H1 (cell line): ENCODE measurements at regions of chr10 and their contacts with region 1.

Region 1: GRCh38 chr10:86363184-86363832 is 3.3 kb downstream of the GRID1 start:
- DNase-seq: peak in 1 of 2 experiments; percentile 88
- H3K4me3 ChIP-seq: peak overlapping the region; percentile 45 to 59 (median 54)
- H3K27ac ChIP-seq: no peak overlapping the region
- H3K4me1 ChIP-seq: peaks cover 0 to 34% (median 23%) of the 10 kb centered on the region in 4 experiments; a peak in 6 of 7 replicates
- H3K27me3 ChIP-seq: peaks cover 55 to 71% (median 69%) of the 10 kb centered on the region in 4 experiments
- CTCF ChIP-seq: peak in 2 of 3 experiments; percentile 62 to 85; a peak in 3 of 4 replicates
- EP300 ChIP-seq: no peak
- POLR2A ChIP-seq: no peak
- RAD21 ChIP-seq: peak; percentile 78 to 87

Region 2: GRCh38 chr10:86178401-86179152 is 184.7 kb before region 1 on chr10:
- CTCF ChIA-PET with region 1: interaction called, 30 read pairs
- POLR2A ChIA-PET with region 1: no interaction called
- DNase-seq: peak; percentile 47 to 83
- H3K4me3 ChIP-seq: no peak overlapping the region
- H3K27ac ChIP-seq: no peak overlapping the region
- H3K4me1 ChIP-seq: no peaks in the 10 kb centered on the region
- H3K27me3 ChIP-seq: no peaks in the 10 kb centered on the region; a peak in 1 of 7 replicates
- CTCF ChIP-seq: peak; percentile 87 to 95 (median 90)
- EP300 ChIP-seq: no peak
- POLR2A ChIP-seq: no peak
- RAD21 ChIP-seq: peak; percentile 81 to 88

Region 3: GRCh38 chr10:86254526-86255174 is 108.7 kb before region 1 on chr10:
- CTCF ChIA-PET with region 1: interaction called, 48 read pairs
- POLR2A ChIA-PET with region 1: no interaction called
- DNase-seq: peak in 1 of 2 experiments; percentile 45
- H3K4me3 ChIP-seq: no peak overlapping the region
- H3K27ac ChIP-seq: no peak overlapping the region
- H3K4me1 ChIP-seq: peaks cover 0 to 6% (median 5%) of the 10 kb centered on the region in 4 experiments; a peak in 4 of 7 replicates
- H3K27me3 ChIP-seq: no peaks in the 10 kb centered on the region; a peak in 1 of 7 replicates
- CTCF ChIP-seq: no peak
- EP300 ChIP-seq: no peak
- POLR2A ChIP-seq: no peak
- RAD21 ChIP-seq: no peak

Region 4: GRCh38 chr10:86261941-86262687 is 101.2 kb before region 1 on chr10:
- CTCF ChIA-PET with region 1: interaction called, 48 read pairs
- POLR2A ChIA-PET with region 1: no interaction called
- DNase-seq: peak; percentile 43 to 67
- H3K4me3 ChIP-seq: no peak overlapping the region
- H3K27ac ChIP-seq: no peak overlapping the region
- H3K4me1 ChIP-seq: peaks cover 0 to 12% (median 7%) of the 10 kb centered on the region in 4 experiments; a peak in 6 of 7 replicates
- H3K27me3 ChIP-seq: peaks cover 0 to 10% (median 4%) of the 10 kb centered on the region in 4 experiments; a peak in 5 of 7 replicates
- CTCF ChIP-seq: peak; percentile 74 to 83 (median 74)
- EP300 ChIP-seq: no peak
- POLR2A ChIP-seq: no peak
- RAD21 ChIP-seq: peak; percentile 75 to 80

Region 5: DNA sequence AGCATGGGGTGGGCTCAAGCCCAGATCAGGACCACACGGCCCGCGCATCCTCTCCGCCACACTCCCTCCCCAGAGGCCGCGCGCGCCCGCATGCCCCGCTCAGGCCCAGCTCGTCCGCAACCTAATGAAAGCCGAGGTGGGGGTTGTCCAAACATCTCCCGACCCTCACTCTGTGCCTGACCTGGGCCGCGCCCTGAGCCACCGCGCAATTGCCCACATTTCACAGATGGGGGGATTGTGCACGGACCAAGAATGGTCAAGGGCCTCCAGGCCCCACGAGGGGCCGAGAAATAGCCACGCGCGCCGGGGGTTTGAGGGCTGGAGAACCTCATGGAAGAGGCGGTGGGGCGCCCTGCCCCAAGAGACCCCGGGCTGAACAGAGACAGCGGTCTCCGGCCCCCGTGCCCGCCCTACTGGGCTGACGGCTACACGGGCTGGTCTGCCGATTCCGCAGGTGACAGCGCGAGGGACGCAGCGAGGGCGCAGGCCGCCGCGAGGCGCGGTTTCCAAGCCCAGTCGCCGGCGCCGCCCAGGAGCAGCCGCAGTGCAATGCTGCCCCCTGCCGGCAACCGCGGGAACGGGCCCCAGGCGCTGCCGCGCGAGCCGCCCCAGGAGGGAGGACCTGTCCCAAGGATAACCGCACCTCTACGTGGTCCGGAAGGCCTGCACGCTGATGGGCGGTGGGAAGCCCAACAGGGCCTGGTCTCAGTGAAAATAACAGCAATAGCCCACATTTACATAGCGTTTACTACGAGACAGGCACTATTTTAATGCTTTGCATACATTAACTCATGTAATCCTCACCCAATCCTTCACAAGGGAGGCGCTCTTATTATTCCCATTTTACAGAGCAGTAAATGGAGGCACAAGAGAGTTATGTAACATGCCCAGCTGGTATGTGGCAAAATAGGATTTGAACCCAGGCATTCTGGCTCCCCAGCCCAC is 13.8 kb after region 1 on chr10:
- CTCF ChIA-PET with region 1: interaction called, 498 read pairs
- POLR2A ChIA-PET with region 1: no interaction called
- DNase-seq: peak in 1 of 2 experiments; percentile 100
- H3K4me3 ChIP-seq: peak overlapping the region in 3 of 4 experiments; percentile 11 to 51 (median 20); a peak in 4 of 8 replicates
- H3K27ac ChIP-seq: no peak overlapping the region
- H3K4me1 ChIP-seq: peaks cover 0 to 3% (median 0%) of the 10 kb centered on the region in 4 experiments; a peak in 1 of 7 replicates
- H3K27me3 ChIP-seq: peaks cover 7 to 26% (median 14%) of the 10 kb centered on the region in 4 experiments
- CTCF ChIP-seq: peak; percentile 90 to 98 (median 96)
- EP300 ChIP-seq: no peak
- POLR2A ChIP-seq: no peak
- RAD21 ChIP-seq: peak; percentile 96 to 98

Region 6: DNA sequence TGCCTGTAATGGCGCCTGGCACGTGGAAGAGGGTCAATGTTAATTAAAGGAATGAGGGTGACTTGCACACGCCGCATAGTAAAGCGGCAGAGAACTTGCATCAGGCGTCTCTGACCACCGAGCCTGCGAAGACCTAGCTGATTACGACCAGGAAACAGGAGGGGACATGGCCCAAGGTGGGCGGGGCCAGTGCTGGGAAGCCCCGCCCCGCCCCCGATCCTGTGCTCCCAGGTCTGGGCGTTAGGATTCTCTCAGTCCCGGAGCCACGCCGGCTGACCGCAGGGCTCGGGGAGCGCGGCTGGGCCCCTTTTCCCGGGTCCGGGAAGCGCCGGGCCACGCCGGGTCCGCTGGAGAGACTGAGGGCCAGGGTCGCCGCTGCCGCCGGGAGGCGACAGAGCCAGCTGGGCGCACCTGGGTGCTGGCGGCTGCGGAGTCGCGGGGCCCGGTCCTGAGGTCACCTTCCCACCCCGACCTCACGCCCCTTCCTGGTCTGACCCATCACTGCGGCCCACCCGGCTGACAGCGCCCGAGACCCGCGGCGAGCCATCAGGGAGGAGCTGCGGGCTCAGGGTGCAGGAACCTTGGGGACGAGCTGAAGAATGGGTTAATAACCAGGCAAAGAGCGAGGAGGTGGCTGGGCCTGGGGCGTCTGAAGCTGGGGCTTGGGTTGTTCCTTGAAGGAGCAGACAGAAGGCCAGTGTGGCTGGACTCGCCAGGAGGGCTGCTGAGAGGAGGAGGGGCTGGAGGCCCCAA is 26.3 kb after region 1 on chr10:
- CTCF ChIA-PET with region 1: interaction called, 11 read pairs
- POLR2A ChIA-PET with region 1: interaction called, 8 read pairs
- DNase-seq: peak; percentile 69 to 93
- H3K4me3 ChIP-seq: peak overlapping the region; percentile 48 to 75 (median 58)
- H3K27ac ChIP-seq: no peak overlapping the region
- H3K4me1 ChIP-seq: peaks cover 0 to 16% (median 5%) of the 10 kb centered on the region in 4 experiments; a peak in 5 of 7 replicates
- H3K27me3 ChIP-seq: peaks cover 0 to 15% (median 11%) of the 10 kb centered on the region in 4 experiments; a peak in 4 of 7 replicates
- CTCF ChIP-seq: no peak
- EP300 ChIP-seq: no peak
- POLR2A ChIP-seq: peak in 1 of 2 experiments; percentile 78; a peak in 2 of 3 replicates
- RAD21 ChIP-seq: no peak; a peak in 1 of 4 replicates

Region 7: GRCh38 chr10:86521678-86522509 is 158.6 kb after region 1 on chr10 and contains the start of gene WAPL:
- CTCF ChIA-PET with region 1: no interaction called
- POLR2A ChIA-PET with region 1: no interaction called
- DNase-seq: peak; percentile 67 to 95
- H3K4me3 ChIP-seq: peak within 1 kb of the TSS; percentile 76 to 91 (median 82)
- H3K27ac ChIP-seq: peak within 1 kb of the TSS; percentile 71
- H3K4me1 ChIP-seq: peaks cover 0 to 5% (median 2%) of the 10 kb centered on the region in 4 experiments; a peak in 5 of 7 replicates
- H3K27me3 ChIP-seq: no peaks in the 10 kb centered on the region
- CTCF ChIP-seq: no peak
- EP300 ChIP-seq: no peak; a peak in 1 of 3 replicates
- POLR2A ChIP-seq: peak in 1 of 2 experiments; percentile 51; a peak in 1 of 3 replicates
- RAD21 ChIP-seq: no peak
- total RNA-seq, gene WAPL: 48.1 and 49.2 TPM in 2 replicates

Region 8: DNA sequence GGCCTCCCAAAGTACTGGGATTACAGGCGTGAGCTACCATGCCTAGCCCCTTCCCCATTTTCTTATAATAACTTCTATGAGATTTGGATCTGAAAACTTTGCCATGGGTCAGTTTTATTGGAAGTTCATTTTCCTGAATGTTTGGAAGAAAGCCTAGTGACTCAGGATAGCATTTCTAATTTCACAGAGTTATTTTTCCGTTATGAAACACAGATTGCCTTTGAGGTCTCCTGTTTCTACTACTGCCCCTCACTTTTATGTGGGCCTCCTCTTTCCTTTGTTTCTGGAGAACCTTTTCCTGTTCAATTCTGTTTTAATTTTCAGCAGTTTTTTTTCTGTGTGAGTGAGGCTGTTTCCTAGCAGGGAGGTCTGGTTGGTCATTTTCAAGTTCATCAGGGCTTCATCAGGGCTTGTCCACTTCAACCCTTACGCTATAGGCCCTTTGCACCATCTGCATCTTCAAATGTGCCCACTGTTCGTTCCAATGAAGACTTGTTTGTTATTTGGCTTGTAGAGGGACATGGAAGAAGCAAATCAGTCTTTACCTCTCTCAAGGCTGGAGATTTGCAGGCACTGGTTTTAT is 451.8 kb after region 1 on chr10:
- CTCF ChIA-PET with region 1: no interaction called
- POLR2A ChIA-PET with region 1: no interaction called
- DNase-seq: no peak
- H3K4me3 ChIP-seq: no peak overlapping the region
- H3K27ac ChIP-seq: no peak overlapping the region
- H3K4me1 ChIP-seq: peaks cover 0 to 11% (median 4%) of the 10 kb centered on the region in 4 experiments; a peak in 4 of 7 replicates
- H3K27me3 ChIP-seq: no peaks in the 10 kb centered on the region
- CTCF ChIP-seq: no peak
- EP300 ChIP-seq: no peak
- POLR2A ChIP-seq: no peak
- RAD21 ChIP-seq: no peak